ENCODE measurements at regions of chr12 and their contacts with region 1.

Region 1: GRCh38 chr12:53159195-53159839 is 21.2 kb upstream of the ZNF740 start:
- DNase-seq: peak; percentile 78 to 93 (median 86)
- ATAC-seq: peak; percentile 96 to 99
- H3K4me3 Mint-ChIP-seq: peak overlapping the region in 1 of 10 donors; percentile 3
- H3K27ac Mint-ChIP-seq: peak overlapping the region in 7 of 10 donors; percentile 0 to 87 (median 64)
- H3K4me1 Mint-ChIP-seq: peaks cover 4 to 12% (median 8%) of the 10 kb centered on the region in 4 donors
- H3K27me3 Mint-ChIP-seq: no peaks in the 10 kb centered on the region

Region 2: DNA sequence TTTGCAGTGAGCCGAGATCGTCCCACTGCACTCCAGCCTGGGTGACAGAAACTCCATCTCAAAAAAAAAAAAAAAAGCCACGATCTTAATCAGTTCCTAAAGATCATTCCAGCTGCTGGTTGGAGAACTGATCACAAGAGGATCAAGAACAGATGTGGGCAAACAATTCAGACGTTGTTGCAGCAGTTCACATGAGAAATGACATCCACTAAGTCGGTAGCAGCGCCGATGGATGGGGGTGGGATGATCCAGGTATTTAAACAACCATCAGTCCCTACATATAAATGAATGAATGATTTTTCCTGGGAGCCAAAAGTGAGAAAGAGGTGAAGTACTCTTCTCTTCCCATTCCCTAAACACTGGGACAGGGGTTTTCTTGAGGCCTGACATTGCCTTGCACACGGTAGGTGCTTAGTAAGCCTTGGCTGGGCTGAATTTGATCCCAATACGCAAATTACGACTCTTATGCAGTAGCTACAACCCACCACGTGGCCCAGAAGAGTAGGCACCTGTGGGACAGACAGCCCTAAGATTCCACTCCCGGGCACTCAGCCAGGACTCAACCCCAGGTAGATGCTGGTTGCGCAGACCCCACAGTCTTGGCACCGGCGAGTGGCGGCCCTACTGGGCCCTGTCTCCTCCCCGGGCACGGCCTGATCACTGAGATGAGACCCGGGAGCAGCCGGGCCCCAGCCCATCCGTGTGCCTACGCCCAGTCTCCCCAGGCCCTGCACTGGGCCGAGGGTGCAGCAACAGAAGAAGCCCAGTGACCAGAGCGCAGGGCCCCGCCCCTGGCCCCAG is 80.7 kb before region 1 on chr12:
- POLR2A ChIA-PET with region 1: no interaction called
- DNase-seq: peak in 9 of 10 donors; percentile 30 to 79 (median 58)
- ATAC-seq: peak; percentile 53 to 62
- H3K4me3 Mint-ChIP-seq: peak overlapping the region; percentile 85 to 99 (median 94)
- H3K27ac Mint-ChIP-seq: peak overlapping the region; percentile 91 to 98 (median 97)
- H3K4me1 Mint-ChIP-seq: peaks cover 24 to 67% (median 54%) of the 10 kb centered on the region in 4 donors
- H3K27me3 Mint-ChIP-seq: no peaks in the 10 kb centered on the region

Region 3: GRCh38 chr12:53129170-53129569 is 30.1 kb before region 1 on chr12:
- POLR2A ChIA-PET with region 1: no interaction called
- DNase-seq: no peak
- ATAC-seq: no peak
- H3K4me3 Mint-ChIP-seq: no peak overlapping the region
- H3K27ac Mint-ChIP-seq: peak overlapping the region in 1 of 10 donors; percentile 33
- H3K4me1 Mint-ChIP-seq: peaks cover 0 to 8% (median 3%) of the 10 kb centered on the region in 4 donors
- H3K27me3 Mint-ChIP-seq: peaks cover 0 to 3% (median 1%) of the 10 kb centered on the region in 5 donors

Region 4: GRCh38 chr12:53190108-53190729 is 30.9 kb after region 1 on chr12:
- POLR2A ChIA-PET with region 1: interaction called, 11 read pairs
- DNase-seq: peak in 8 of 10 donors; percentile 30 to 60 (median 52)
- ATAC-seq: peak; percentile 94 to 96
- H3K4me3 Mint-ChIP-seq: peak overlapping the region in 2 of 10 donors; percentile 30 to 63
- H3K27ac Mint-ChIP-seq: peak overlapping the region in 8 of 10 donors; percentile 40 to 82 (median 73)
- H3K4me1 Mint-ChIP-seq: peaks cover 12 to 49% (median 34%) of the 10 kb centered on the region in 4 donors
- H3K27me3 Mint-ChIP-seq: no peaks in the 10 kb centered on the region

Region 5: GRCh38 chr12:53205747-53206419 is 46.6 kb after region 1 on chr12:
- POLR2A ChIA-PET with region 1: interaction called, 15 read pairs
- DNase-seq: peak in 2 of 10 donors; percentile 44 to 55
- ATAC-seq: peak; percentile 26 to 58
- H3K4me3 Mint-ChIP-seq: peak overlapping the region; percentile 77 to 95 (median 90)
- H3K27ac Mint-ChIP-seq: peak overlapping the region; percentile 83 to 98 (median 92)
- H3K4me1 Mint-ChIP-seq: peaks cover 39 to 92% (median 74%) of the 10 kb centered on the region in 4 donors
- H3K27me3 Mint-ChIP-seq: no peaks in the 10 kb centered on the region

Measured in naive thymus-derived CD8-positive, alpha-beta T cell (primary cell).